Naive thymus-derived CD4-positive, alpha-beta T cell (primary cell): ENCODE measurements at regions of chr7 and their contacts with region 1.

Region 1: GRCh38 chr7:100889761-100890634 is 483 bp upstream of the UFSP1 start:
- DNase-seq: peak; percentile 87 to 93 (median 91)
- ATAC-seq: peak; percentile 93
- H3K4me3 ChIP-seq: peak overlapping the region; percentile 80
- H3K4me3 Mint-ChIP-seq: peak overlapping the region; percentile 80 to 90 (median 88)
- H3K27ac ChIP-seq: peak overlapping the region; percentile 66
- H3K27ac Mint-ChIP-seq: peak overlapping the region in 6 of 9 donors; percentile 14 to 95 (median 76)
- H3K4me1 ChIP-seq: peaks cover 31 to 45% of the 10 kb centered on the region in 2 donors
- H3K4me1 Mint-ChIP-seq: peaks cover 32 to 48% (median 41%) of the 10 kb centered on the region in 7 donors
- H3K27me3 ChIP-seq: no peaks in the 10 kb centered on the region
- H3K27me3 Mint-ChIP-seq: peaks cover 16 to 40% (median 22%) of the 10 kb centered on the region in 5 donors

Region 2: DNA sequence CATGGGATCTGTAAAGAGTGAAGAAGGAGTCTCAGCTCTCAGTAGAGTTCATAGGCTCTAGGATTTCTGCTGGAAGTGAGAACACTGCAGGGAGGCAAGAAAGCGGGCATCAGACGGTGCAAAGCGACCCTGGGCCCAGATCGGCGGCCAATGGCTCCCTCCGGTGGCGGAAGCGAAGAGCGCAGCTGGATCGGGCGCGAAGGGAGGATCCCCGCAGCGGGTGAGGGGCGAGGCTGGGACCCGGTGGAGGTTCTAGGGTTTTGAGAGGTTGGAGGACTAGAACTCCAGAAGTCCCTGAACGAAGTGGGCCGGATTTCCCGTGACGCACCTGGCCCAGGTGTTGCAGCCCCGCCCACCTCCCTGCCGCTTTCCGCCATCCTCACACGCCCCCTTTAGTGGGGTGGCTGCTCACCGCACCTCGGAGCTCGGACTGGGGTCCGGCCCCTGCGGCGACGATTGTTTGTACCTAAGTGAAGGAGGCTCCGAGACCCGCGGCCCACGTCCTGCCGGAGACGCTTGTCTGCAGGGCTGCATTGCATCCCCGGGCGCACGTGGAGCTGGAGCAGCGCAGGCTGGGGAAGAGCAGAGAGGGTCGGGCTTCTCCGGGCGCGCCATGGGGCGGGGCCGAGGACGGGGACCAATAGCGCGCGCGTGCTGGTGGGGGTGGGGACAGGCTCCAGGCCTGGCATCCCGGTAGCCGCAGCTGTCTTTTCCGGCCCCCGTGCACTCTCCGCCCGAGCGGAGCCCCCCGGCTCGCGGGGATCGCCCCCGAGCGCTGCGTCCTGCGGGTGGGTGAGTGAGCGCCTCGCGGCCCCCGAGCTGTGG is 37.7 kb before region 1 on chr7 and contains the start of gene SLC12A9:
- CTCF ChIA-PET with region 1: interaction called, 8 read pairs
- POLR2A ChIA-PET with region 1: interaction called, 10 read pairs
- intact Hi-C with region 1: loop called (anchors 1 to 2 kb)
- DNase-seq: peak; percentile 71 to 90 (median 85)
- ATAC-seq: peak; percentile 96
- H3K4me3 ChIP-seq: peak within 1 kb of the TSS; percentile 73
- H3K4me3 Mint-ChIP-seq: peak within 1 kb of the TSS; percentile 89 to 95 (median 92)
- H3K27ac ChIP-seq: peak within 1 kb of the TSS; percentile 76
- H3K27ac Mint-ChIP-seq: peak within 1 kb of the TSS; percentile 71 to 97 (median 90)
- H3K4me1 ChIP-seq: peaks cover 8 to 16% of the 10 kb centered on the region in 2 donors
- H3K4me1 Mint-ChIP-seq: peaks cover 0 to 31% (median 19%) of the 10 kb centered on the region in 7 donors
- H3K27me3 ChIP-seq: no peaks in the 10 kb centered on the region
- H3K27me3 Mint-ChIP-seq: no peaks in the 10 kb centered on the region
- total RNA-seq, gene SLC12A9: 50.4 to 78.6 (median 62.7) TPM

Region 3: DNA sequence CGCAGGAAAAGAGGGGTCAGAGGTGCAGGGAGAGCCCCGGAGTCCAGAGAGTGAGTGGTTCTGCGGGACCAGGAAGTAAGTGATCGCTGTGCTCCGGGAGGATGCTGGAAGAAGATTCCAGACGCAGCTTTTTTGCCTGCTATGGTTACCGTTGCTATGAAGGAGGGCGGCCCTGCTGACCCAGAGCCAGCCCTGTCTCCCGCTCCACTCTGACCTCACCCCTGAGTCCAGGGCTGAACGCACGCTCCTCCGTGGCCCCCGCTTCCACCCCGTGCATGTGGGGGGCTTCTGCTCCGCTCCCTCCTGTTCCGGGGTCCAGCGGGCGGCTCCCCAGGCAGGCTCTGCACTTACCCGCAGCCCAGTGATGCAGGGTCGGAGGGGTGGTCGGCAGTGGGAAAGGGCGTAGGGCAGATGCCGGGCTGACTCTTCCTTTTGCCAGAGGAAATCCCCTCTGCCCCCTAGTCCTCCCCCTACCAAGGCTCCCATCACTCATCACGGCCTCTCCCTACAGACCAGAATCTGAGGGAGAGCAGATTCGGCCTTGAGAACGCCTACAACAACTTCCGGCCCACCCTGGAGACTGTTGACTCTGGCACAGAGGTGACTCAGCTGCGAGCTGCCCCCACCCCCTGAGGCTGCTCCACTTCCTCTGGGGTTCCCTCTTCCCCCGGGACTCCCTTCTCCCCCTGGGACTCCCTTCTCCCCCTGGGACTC is 127.2 kb after region 1 on chr7:
- CTCF ChIA-PET with region 1: no interaction called
- POLR2A ChIA-PET with region 1: no interaction called
- intact Hi-C with region 1: loop called (anchors 5 kb)
- DNase-seq: peak in 7 of 9 donors; percentile 12 to 75 (median 37)
- ATAC-seq: peak; percentile 87
- H3K4me3 ChIP-seq: peak overlapping the region; percentile 84
- H3K4me3 Mint-ChIP-seq: peak overlapping the region; percentile 65 to 93 (median 82)
- H3K27ac ChIP-seq: peak overlapping the region; percentile 12
- H3K27ac Mint-ChIP-seq: peak overlapping the region in 7 of 9 donors; percentile 34 to 95 (median 86)
- H3K4me1 ChIP-seq: peaks cover 4 to 12% of the 10 kb centered on the region in 2 donors
- H3K4me1 Mint-ChIP-seq: peaks cover 0 to 26% (median 12%) of the 10 kb centered on the region in 7 donors
- H3K27me3 ChIP-seq: no peaks in the 10 kb centered on the region
- H3K27me3 Mint-ChIP-seq: peaks cover 5 to 24% (median 12%) of the 10 kb centered on the region in 5 donors

Region 4: DNA sequence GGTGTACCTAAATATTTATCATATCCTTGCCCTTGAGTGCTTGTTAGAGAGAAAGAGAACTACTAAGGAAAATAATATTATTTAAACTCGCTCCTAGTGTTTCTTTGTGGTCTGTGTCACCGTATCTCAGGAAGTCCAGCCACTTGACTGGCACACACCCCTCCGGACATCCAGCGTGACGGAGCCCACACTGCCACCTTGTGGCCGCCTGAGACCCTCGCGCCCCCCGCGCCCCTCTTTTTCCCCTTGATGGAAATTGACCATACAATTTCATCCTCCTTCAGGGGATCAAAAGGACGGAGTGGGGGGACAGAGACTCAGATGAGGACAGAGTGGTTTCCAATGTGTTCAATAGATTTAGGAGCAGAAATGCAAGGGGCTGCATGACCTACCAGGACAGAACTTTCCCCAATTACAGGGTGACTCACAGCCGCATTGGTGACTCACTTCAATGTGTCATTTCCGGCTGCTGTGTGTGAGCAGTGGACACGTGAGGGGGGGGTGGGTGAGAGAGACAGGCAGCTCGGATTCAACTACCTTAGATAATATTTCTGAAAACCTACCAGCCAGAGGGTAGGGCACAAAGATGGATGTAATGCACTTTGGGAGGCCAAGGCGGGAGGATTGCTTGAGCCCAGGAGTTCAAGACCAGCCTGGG is 248.3 kb after region 1 on chr7:
- CTCF ChIA-PET with region 1: no interaction called
- POLR2A ChIA-PET with region 1: no interaction called
- intact Hi-C with region 1: loop called in 1 of 2 experiments (anchors 2 kb)
- DNase-seq: peak in 3 of 9 donors; percentile 15 to 73 (median 70)
- ATAC-seq: peak; percentile 93
- H3K4me3 ChIP-seq: no peak overlapping the region
- H3K4me3 Mint-ChIP-seq: peak overlapping the region in 3 of 10 donors; percentile 46 to 70 (median 47)
- H3K27ac ChIP-seq: no peak overlapping the region
- H3K27ac Mint-ChIP-seq: peak overlapping the region in 3 of 9 donors; percentile 52 to 71 (median 62)
- H3K4me1 ChIP-seq: peaks cover 0 to 4% of the 10 kb centered on the region in 2 donors
- H3K4me1 Mint-ChIP-seq: peaks cover 0 to 30% (median 9%) of the 10 kb centered on the region in 7 donors
- H3K27me3 ChIP-seq: no peaks in the 10 kb centered on the region
- H3K27me3 Mint-ChIP-seq: peaks cover 4 to 44% (median 21%) of the 10 kb centered on the region in 5 donors

Region 5: GRCh38 chr7:101217388-101218235 is 327.6 kb after region 1 on chr7 and contains the starts of genes PLOD3 and ZNHIT1:
- CTCF ChIA-PET with region 1: no interaction called
- POLR2A ChIA-PET with region 1: no interaction called
- intact Hi-C with region 1: loop called in 1 of 2 experiments (anchors 1 kb)
- DNase-seq: peak; percentile 86 to 97 (median 94)
- ATAC-seq: peak; percentile 85
- H3K4me3 ChIP-seq: peak within 1 kb of the TSS; percentile 70
- H3K4me3 Mint-ChIP-seq: peak within 1 kb of the TSS; percentile 89 to 97 (median 96)
- H3K27ac ChIP-seq: peak within 1 kb of the TSS; percentile 87
- H3K27ac Mint-ChIP-seq: peak within 1 kb of the TSS; percentile 88 to 96 (median 93)
- H3K4me1 ChIP-seq: peaks cover 15% of the 10 kb centered on the region in 2 donors
- H3K4me1 Mint-ChIP-seq: peaks cover 27 to 54% (median 46%) of the 10 kb centered on the region in 7 donors
- H3K27me3 ChIP-seq: no peaks in the 10 kb centered on the region
- H3K27me3 Mint-ChIP-seq: no peaks in the 10 kb centered on the region
- total RNA-seq, gene PLOD3: 18.5 to 88.4 (median 44.2) TPM
- total RNA-seq, gene ZNHIT1: 32.1 to 72.1 (median 37.6) TPM

Region 6: GRCh38 chr7:101287032-101287431 is 397.0 kb after region 1 on chr7:
- CTCF ChIA-PET with region 1: interaction called, 3 read pairs
- POLR2A ChIA-PET with region 1: no interaction called
- intact Hi-C with region 1: loop called in 1 of 2 experiments (anchors 2 kb)
- DNase-seq: no peak
- ATAC-seq: no peak
- H3K4me3 ChIP-seq: no peak overlapping the region
- H3K4me3 Mint-ChIP-seq: no peak overlapping the region
- H3K27ac ChIP-seq: no peak overlapping the region
- H3K27ac Mint-ChIP-seq: no peak overlapping the region
- H3K4me1 ChIP-seq: no peaks in the 10 kb centered on the region
- H3K4me1 Mint-ChIP-seq: peaks cover 3 to 17% (median 5%) of the 10 kb centered on the region in 7 donors
- H3K27me3 ChIP-seq: no peaks in the 10 kb centered on the region
- H3K27me3 Mint-ChIP-seq: peaks cover 6 to 21% (median 9%) of the 10 kb centered on the region in 5 donors